ENCODE measurements at regions of chr10 and their contacts with region 1.

Region 1: DNA sequence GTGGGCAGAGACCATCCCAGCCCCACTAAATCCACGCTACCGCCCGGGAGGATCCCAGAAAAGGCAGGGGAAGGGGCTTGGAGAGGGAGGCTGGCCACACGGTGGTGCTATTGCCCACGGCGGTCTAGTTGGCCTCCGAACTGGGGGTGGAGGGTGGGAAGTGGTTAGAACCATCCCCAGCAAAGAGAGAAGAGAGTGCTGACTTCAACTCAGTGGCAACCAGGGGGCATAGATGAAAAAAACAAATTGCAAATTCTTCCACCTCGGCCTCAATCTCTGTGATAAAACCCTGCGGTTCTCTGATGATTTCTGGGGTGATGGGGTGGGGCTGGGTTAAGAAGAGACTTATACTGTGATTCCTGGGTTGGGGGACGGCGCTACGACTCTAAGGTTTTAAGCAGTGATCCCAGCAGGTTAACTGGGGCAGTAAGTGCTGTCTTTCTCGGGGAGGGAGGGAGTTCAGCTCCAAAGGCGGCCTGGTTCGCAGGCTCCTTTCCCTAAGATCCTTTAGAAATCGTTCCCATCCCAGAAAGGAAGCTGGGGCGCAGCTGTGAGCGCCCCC is 154.5 kb upstream of the LYZL2 start:
- DNase-seq: peak; percentile 90 to 91
- ATAC-seq: peak; percentile 77 to 90 (median 86)
- H3K4me3 ChIP-seq: peak overlapping the region; percentile 51 to 96 (median 75)
- H3K27ac ChIP-seq: peak overlapping the region; percentile 94 to 100 (median 98)
- H3K4me1 ChIP-seq: peaks cover 0 to 46% (median 12%) of the 10 kb centered on the region in 9 donors
- H3K27me3 ChIP-seq: no peaks in the 10 kb centered on the region
- CTCF ChIP-seq: peak; percentile 62 to 90 (median 87)

Region 2: DNA sequence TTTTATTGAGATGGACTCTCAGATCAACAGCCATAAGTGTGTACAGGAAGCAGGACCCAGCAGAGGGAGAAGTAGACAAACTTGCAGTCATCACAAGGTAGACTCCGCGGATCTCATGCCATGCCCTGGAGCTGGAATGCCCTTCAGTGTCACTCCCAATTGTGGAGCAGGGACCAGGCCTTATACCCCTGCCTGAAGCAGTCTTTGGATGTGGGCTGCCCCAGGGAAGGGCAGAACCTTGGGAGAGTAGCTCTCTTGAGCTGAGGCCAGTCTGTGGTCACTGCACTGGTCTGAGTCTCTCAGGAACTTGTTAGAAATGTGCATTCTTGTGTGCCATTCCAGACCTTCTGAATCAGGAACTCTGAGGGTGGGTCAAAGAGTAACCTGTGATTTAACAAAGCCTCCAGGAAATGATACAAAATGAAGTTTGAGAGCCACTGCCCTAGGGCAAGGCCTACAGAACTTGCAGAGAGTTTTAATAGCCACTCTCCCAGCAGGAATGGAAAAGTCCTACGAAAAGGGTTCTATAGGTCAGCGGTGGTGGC is 1427.2 kb before region 1 on chr10:
- intact Hi-C with region 1: no loop called
- DNase-seq: no peak
- ATAC-seq: no peak
- H3K4me3 ChIP-seq: no peak overlapping the region
- H3K27ac ChIP-seq: no peak overlapping the region
- H3K4me1 ChIP-seq: peaks cover 0 to 3% (median 0%) of the 10 kb centered on the region in 9 donors
- H3K27me3 ChIP-seq: no peaks in the 10 kb centered on the region
- CTCF ChIP-seq: no peak

Region 3: DNA sequence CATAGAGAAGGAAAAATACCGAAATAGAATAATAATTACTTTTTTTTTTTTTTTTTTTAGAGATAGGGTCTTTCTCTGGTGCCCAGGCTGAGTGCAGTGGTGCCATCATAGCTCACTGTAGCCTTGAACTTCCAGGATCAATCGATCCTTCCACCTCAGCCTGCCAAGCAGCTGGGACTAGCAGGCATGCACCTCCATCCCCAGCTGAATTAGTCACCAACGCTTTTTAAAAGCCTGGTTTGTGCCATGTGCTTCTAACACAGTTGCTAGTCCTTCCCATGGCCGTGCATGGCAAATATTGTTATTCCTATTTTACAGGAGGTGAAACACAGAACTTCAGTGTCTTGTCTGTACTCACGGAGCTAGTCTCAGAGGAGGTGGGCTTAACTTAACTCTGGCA is 177.7 kb before region 1 on chr10:
- intact Hi-C with region 1: no loop called
- DNase-seq: no peak
- ATAC-seq: no peak
- H3K4me3 ChIP-seq: no peak overlapping the region
- H3K27ac ChIP-seq: no peak overlapping the region
- H3K4me1 ChIP-seq: peaks cover 0 to 5% (median 0%) of the 10 kb centered on the region in 9 donors
- H3K27me3 ChIP-seq: no peaks in the 10 kb centered on the region
- CTCF ChIP-seq: no peak

Region 4: DNA sequence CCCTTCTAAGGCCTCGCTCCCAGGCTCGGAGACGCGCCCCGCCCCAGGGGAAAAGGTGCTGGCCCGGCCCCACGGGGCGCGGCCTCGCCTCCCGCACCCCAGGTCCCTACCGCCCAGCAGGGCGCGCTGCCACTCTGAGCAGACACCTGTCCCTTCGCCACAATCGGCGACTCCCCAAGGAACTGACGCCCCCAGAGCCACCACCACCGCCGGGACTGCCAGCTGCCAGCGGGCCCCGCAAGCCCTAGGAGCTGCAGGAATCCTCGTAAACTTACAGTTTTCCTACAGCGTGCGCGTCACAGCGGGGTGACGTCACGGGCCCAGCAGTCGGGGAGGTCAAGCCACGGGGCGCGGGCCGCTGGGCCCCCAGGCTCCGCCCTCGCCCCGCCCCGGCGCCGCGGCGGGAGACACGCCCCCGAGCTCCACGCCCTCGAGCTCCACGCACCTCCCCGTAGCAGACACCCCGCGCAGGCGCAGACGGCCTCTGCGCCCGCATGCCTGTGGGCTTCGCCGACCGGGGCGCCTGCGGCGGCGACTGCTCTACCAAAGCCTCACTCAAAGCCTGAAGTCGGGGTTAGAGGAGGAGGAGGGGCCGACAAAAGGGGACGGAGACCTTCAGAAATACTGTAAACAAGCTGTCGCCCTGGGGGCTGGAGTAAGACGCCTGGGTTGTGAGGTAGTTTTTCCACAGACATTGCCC is 247.7 kb after region 1 on chr10 and contains the start of gene ZNF438:
- intact Hi-C with region 1: loop called in 8 of 10 experiments (anchors 1 to 10 kb)
- DNase-seq: peak; percentile 93 to 97
- ATAC-seq: peak; percentile 95 to 99 (median 96)
- H3K4me3 ChIP-seq: peak within 1 kb of the TSS; percentile 26 to 82 (median 62)
- H3K27ac ChIP-seq: peak within 1 kb of the TSS; percentile 97 to 100 (median 99)
- H3K4me1 ChIP-seq: peaks cover 0 to 58% (median 45%) of the 10 kb centered on the region in 9 donors
- H3K27me3 ChIP-seq: no peaks in the 10 kb centered on the region
- CTCF ChIP-seq: peak; percentile 41 to 86 (median 66)
- total RNA-seq, gene ZNF438: 9.3 to 16.1 (median 12.4) TPM

Region 5: GRCh38 chr10:31146491-31147209 is 362.6 kb after region 1 on chr10:
- intact Hi-C with region 1: loop called in 2 of 10 experiments (anchors 5 kb)
- DNase-seq: peak; percentile 60 to 84
- ATAC-seq: peak; percentile 72 to 94 (median 87)
- H3K4me3 ChIP-seq: peak overlapping the region in 3 of 10 donors; percentile 13 to 22 (median 21)
- H3K27ac ChIP-seq: peak overlapping the region in 9 of 10 donors; percentile 46 to 86 (median 63)
- H3K4me1 ChIP-seq: peaks cover 6 to 45% (median 23%) of the 10 kb centered on the region in 9 donors
- H3K27me3 ChIP-seq: no peaks in the 10 kb centered on the region
- CTCF ChIP-seq: no peak

Region 6: DNA sequence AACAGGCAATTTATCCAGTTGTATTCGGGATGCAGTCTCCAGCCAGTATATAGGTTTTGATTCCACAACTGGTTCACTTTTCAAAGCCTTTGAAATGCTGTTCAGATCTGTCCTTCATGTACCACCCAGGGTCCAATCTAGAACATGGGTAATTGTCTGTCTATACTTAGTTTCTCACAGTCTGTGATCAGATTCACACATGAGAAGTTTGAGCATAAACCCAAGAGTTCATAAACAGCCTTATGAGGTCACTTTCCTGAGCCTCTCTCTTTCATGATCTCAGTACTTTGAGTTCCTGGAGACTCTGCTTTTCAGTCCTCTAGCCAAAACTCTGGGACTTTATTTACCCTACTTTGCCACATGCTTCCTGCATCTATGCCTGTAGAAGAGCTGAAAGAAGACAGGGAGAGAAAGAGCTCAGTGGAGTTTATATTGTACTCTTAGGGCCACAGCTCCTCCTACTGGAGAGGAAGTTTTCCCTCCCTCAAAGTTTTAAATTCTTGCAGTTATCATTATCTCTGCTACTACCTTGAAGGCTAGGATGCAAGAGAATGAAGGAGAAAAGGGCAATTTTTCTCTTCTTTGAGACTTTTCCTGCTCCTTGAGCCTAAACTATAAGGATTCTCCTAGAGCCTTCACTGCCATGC is 707.0 kb after region 1 on chr10:
- intact Hi-C with region 1: loop called in 8 of 10 experiments (anchors 1 to 10 kb)
- DNase-seq: peak in 1 of 2 donors; percentile 23
- ATAC-seq: peak in 6 of 8 donors; percentile 41 to 65 (median 51)
- H3K4me3 ChIP-seq: no peak overlapping the region
- H3K27ac ChIP-seq: no peak overlapping the region
- H3K4me1 ChIP-seq: no peaks in the 10 kb centered on the region
- H3K27me3 ChIP-seq: no peaks in the 10 kb centered on the region
- CTCF ChIP-seq: peak; percentile 27 to 68 (median 60)

Region 7: DNA sequence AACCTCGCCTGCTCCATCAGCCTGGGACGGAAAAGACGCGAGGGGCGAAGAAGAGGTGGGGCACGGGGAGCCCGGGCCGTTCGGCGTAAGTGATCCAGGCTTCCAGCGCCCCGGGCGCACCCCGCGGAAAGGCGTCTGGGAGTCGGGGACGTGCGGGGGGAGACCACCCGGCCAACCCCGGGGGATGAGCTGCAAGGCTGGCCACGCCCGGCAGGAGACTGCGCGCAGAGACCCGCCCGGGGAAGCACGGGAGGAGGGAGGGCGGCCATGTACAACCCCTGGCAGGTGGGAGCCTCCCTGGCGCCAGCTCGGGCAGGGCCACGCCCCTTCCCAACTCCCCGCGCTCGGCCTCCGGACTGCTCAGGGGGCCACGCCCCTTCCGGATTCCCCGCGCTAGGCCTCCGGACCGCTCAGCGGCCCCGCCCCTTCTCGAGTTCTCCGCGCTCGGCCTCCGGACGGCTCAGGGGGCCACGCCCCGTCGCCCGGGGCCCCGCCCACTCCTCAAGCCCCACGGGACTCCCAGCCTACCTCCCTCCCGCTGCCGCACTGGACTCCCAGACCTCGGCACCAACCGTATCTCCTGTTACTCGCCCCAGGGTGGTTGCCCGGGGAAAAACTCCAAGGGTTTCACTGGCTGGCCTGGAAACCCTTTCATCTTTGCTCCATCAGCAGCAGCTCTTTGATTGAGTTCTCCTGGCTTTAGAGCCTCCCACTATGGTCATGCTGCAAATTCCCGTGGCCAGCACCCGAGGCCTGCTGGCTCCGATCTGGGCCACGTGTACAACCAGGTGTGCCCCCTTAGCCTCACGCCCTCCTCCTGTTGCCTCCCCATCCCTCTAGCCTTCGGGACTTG is 819.4 kb after region 1 on chr10:
- intact Hi-C with region 1: loop called in 2 of 10 experiments (anchors 10 kb)
- DNase-seq: peak; percentile 96 to 97
- ATAC-seq: peak; percentile 94 to 98 (median 96)
- H3K4me3 ChIP-seq: peak overlapping the region; percentile 48 to 76 (median 64)
- H3K27ac ChIP-seq: peak overlapping the region; percentile 74 to 95 (median 90)
- H3K4me1 ChIP-seq: peaks cover 0 to 46% (median 17%) of the 10 kb centered on the region in 9 donors
- H3K27me3 ChIP-seq: no peaks in the 10 kb centered on the region
- CTCF ChIP-seq: peak in 1 of 9 donors; percentile 13

Region 8: GRCh38 chr10:31759799-31760626 is 976.0 kb after region 1 on chr10:
- intact Hi-C with region 1: loop called in 1 of 10 experiments (anchors 10 kb)
- DNase-seq: peak; percentile 95 to 97
- ATAC-seq: peak; percentile 93 to 97 (median 96)
- H3K4me3 ChIP-seq: peak overlapping the region; percentile 72 to 95 (median 88)
- H3K27ac ChIP-seq: peak overlapping the region; percentile 89 to 99 (median 98)
- H3K4me1 ChIP-seq: peaks cover 2 to 45% (median 30%) of the 10 kb centered on the region in 9 donors
- H3K27me3 ChIP-seq: no peaks in the 10 kb centered on the region
- CTCF ChIP-seq: peak in 1 of 9 donors; percentile 9

Region 9: DNA sequence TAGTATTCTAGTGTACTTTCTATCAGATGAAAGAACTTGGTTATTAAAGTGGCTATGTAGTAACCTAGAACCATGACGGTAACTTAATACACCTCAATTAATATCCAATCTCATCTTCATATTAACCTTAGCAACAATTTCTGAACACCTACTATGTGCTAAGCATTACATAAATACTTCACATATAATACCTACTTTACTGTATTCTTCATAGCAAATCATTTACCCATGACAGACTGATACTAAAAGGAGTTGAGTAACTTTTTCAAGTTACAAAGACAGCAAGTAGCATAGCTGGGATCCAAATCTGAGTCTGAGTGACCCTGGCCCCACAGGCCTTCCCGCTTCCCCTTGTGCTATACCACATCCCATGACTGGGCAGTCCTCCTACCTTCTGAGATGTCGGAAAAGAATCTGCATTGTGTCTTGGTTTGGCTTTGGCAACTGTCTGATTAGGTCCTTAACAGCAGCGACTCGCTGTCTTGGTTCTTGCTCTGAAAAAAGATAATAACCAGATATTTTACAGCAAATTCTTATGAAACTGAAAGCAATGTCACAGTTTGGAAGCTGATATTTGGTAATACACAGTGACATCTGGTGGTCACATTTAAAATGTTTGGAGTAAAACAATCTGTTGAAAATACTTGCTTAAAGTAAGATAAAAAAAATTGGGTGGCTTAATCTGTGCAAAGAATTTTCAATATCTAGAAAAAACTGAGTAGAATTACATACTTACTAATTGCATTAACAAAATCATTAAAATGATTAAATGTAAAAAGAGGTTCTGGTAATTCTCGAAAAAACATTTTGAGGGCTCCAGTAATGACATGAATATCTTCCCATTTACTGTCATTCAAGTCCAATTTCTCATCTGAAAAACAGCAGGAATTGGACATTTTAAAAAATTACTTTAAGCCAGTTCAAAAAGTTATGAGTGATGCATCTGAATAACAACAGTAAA is 1024.5 kb after region 1 on chr10:
- intact Hi-C with region 1: loop called in 3 of 10 experiments (anchors 1 to 5 kb)
- DNase-seq: peak in 1 of 2 donors; percentile 39
- ATAC-seq: peak in 7 of 8 donors; percentile 75 to 90 (median 82)
- H3K4me3 ChIP-seq: peak overlapping the region in 9 of 10 donors; percentile 26 to 55 (median 47)
- H3K27ac ChIP-seq: peak overlapping the region; percentile 25 to 86 (median 77)
- H3K4me1 ChIP-seq: peaks cover 0 to 22% (median 11%) of the 10 kb centered on the region in 9 donors
- H3K27me3 ChIP-seq: no peaks in the 10 kb centered on the region
- CTCF ChIP-seq: peak; percentile 38 to 78 (median 66)